ENCODE measurements at regions of chr2 and their contacts with region 1.

Region 1: GRCh38 chr2:178522950-178523595 is 42.8 kb downstream of the PLEKHA3 start:
- DNase-seq: peak; percentile 92
- H3K4me3 Mint-ChIP-seq: peak overlapping the region; percentile 82
- H3K27ac Mint-ChIP-seq: peak overlapping the region; percentile 87
- H3K4me1 Mint-ChIP-seq: peaks cover 48% of the 10 kb centered on the region
- H3K27me3 Mint-ChIP-seq: no peaks in the 10 kb centered on the region

Region 2: GRCh38 chr2:177708660-177709444 is 814.2 kb before region 1 on chr2:
- CTCF ChIA-PET with region 1: no interaction called
- intact Hi-C with region 1: no loop called
- DNase-seq: no peak
- H3K4me3 Mint-ChIP-seq: no peak overlapping the region
- H3K27ac Mint-ChIP-seq: no peak overlapping the region
- H3K4me1 Mint-ChIP-seq: no peaks in the 10 kb centered on the region
- H3K27me3 Mint-ChIP-seq: peaks cover 5% of the 10 kb centered on the region

Region 3: GRCh38 chr2:178018141-178018540 is 504.9 kb before region 1 on chr2:
- CTCF ChIA-PET with region 1: no interaction called
- intact Hi-C with region 1: no loop called
- DNase-seq: no peak
- H3K4me3 Mint-ChIP-seq: no peak overlapping the region
- H3K27ac Mint-ChIP-seq: no peak overlapping the region
- H3K4me1 Mint-ChIP-seq: no peaks in the 10 kb centered on the region
- H3K27me3 Mint-ChIP-seq: peaks cover 2% of the 10 kb centered on the region

Region 4: GRCh38 chr2:178397002-178397605 is 126.0 kb before region 1 on chr2:
- CTCF ChIA-PET with region 1: no interaction called
- intact Hi-C with region 1: loop called (anchors 1 kb)
- DNase-seq: no peak
- H3K4me3 Mint-ChIP-seq: no peak overlapping the region
- H3K27ac Mint-ChIP-seq: no peak overlapping the region
- H3K4me1 Mint-ChIP-seq: no peaks in the 10 kb centered on the region
- H3K27me3 Mint-ChIP-seq: no peaks in the 10 kb centered on the region

Region 5: GRCh38 chr2:179106676-179107428 is 583.8 kb after region 1 on chr2:
- CTCF ChIA-PET with region 1: no interaction called
- intact Hi-C with region 1: loop called (anchors 5 kb)
- DNase-seq: peak; percentile 21
- H3K4me3 Mint-ChIP-seq: no peak overlapping the region
- H3K27ac Mint-ChIP-seq: no peak overlapping the region
- H3K4me1 Mint-ChIP-seq: peaks cover 30% of the 10 kb centered on the region
- H3K27me3 Mint-ChIP-seq: no peaks in the 10 kb centered on the region

Region 6: DNA sequence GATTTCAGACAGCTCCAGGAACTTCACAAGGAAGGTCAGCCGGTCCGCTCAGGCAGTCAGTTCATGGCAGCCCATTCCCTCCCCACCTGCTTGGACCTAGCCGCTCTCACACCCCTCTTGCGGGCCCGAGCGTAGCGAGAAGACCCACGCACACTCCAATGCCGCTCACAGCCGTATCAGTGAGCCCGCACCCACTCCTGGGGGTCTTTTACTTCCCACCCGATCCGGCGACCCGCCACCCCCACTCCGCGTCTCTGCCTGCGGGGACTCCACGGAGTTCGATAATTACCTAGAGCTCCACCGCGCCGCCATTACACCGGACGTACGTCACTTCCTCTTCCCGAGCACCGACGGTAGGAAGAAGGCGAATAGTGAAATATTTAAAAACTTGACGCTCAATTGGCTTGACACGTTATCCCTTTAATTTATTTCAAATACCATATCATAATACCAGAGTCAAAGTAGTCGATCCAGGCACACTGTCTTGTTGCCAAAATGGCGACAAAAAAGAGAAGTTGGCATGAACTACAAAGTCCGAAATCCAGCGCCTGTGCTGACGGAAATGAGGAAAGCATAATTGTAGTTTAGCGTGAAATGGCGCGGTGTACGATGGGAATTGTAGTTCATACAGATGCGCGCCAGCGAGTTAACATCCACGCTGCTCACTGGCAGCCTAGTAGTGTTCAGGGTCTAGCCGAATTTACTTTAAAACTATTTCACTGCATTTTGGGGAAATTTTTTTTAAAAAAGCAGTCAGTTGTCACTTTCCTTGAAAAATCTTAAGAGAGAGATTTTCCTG is 1483.9 kb after region 1 on chr2 and contains the start of gene CWC22:
- CTCF ChIA-PET with region 1: no interaction called
- intact Hi-C with region 1: loop called (anchors 10 kb)
- DNase-seq: peak; percentile 93
- H3K4me3 Mint-ChIP-seq: peak within 1 kb of the TSS; percentile 92
- H3K27ac Mint-ChIP-seq: peak within 1 kb of the TSS; percentile 100
- H3K4me1 Mint-ChIP-seq: peaks cover 36% of the 10 kb centered on the region
- H3K27me3 Mint-ChIP-seq: no peaks in the 10 kb centered on the region
- total RNA-seq, gene CWC22: 20.4 TPM

Measured in activated naive CD4-positive, alpha-beta T cell treated with anti-CD3 and anti-CD28 coated beads for 36 hours (primary cell).